ENCODE measurements at regions of chr4 and their contacts with region 1.

Region 1: GRCh38 chr4:139015269-139015947 is at the start of gene NOCT:
- DNase-seq: peak; percentile 90
- H3K4me3 Mint-ChIP-seq: peak within 1 kb of the TSS; percentile 96
- H3K27ac Mint-ChIP-seq: peak within 1 kb of the TSS; percentile 91
- H3K4me1 Mint-ChIP-seq: peaks cover 43% of the 10 kb centered on the region
- H3K27me3 Mint-ChIP-seq: no peaks in the 10 kb centered on the region
- total RNA-seq, gene NOCT: 24.1 and 26.9 TPM in 2 replicates

Region 2: GRCh38 chr4:139030614-139031235 is 15.3 kb after region 1 on chr4:
- intact Hi-C with region 1: loop called (anchors 1 kb)
- DNase-seq: peak; percentile 55
- H3K4me3 Mint-ChIP-seq: no peak overlapping the region
- H3K27ac Mint-ChIP-seq: no peak overlapping the region
- H3K4me1 Mint-ChIP-seq: peaks cover 15% of the 10 kb centered on the region
- H3K27me3 Mint-ChIP-seq: no peaks in the 10 kb centered on the region

Region 3: DNA sequence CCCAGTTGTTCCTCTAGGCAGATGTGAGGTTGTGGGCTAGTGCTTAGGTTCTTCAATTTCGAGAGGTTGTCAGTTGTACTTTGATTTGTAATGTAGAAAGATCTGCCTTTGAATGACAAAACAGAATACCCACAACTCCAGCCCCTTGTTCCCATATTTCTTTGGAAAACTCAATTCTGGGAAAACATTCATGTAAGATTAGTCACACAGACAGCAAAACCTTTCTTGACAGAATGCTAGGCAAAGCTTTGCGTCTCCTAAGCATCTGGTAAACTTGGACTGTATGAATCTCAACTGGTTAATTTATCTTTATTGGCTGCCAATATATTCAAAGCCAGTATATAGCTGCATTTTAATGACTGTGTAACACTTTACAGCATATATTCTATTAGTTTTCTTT is 35.0 kb after region 1 on chr4:
- intact Hi-C with region 1: no loop called
- DNase-seq: no peak
- H3K4me3 Mint-ChIP-seq: no peak overlapping the region
- H3K27ac Mint-ChIP-seq: no peak overlapping the region
- H3K4me1 Mint-ChIP-seq: peaks cover 12% of the 10 kb centered on the region
- H3K27me3 Mint-ChIP-seq: no peaks in the 10 kb centered on the region

Region 4: GRCh38 chr4:139295206-139295941 is 280.0 kb after region 1 on chr4:
- intact Hi-C with region 1: loop called (anchors 1 kb)
- DNase-seq: peak; percentile 92
- H3K4me3 Mint-ChIP-seq: peak overlapping the region; percentile 93
- H3K27ac Mint-ChIP-seq: peak overlapping the region; percentile 94
- H3K4me1 Mint-ChIP-seq: peaks cover 39% of the 10 kb centered on the region
- H3K27me3 Mint-ChIP-seq: no peaks in the 10 kb centered on the region

Region 5: GRCh38 chr4:139554893-139555704 is 539.7 kb after region 1 on chr4:
- intact Hi-C with region 1: loop called (anchors 2 kb)
- DNase-seq: peak; percentile 78
- H3K4me3 Mint-ChIP-seq: peak overlapping the region; percentile 93
- H3K27ac Mint-ChIP-seq: peak overlapping the region; percentile 96
- H3K4me1 Mint-ChIP-seq: peaks cover 47% of the 10 kb centered on the region
- H3K27me3 Mint-ChIP-seq: peaks cover 13% of the 10 kb centered on the region

Measured in activated T-helper 1 cell treated with anti-CD3 and anti-CD28 coated beads, Interleukin-12 subunit alpha, Interleukin-12 subunit beta, Interleukin-2, Interleukin-4 antibody, amounts not matched to agents 30 ng/mL and 10 ng/mL and 1 ng/mL, durations not matched to agents 14 hours and 24 hours and 36 hours (primary cell).